PC-3 (cell line): ENCODE measurements at regions of chr19 and their contacts with region 1.

Region 1: DNA sequence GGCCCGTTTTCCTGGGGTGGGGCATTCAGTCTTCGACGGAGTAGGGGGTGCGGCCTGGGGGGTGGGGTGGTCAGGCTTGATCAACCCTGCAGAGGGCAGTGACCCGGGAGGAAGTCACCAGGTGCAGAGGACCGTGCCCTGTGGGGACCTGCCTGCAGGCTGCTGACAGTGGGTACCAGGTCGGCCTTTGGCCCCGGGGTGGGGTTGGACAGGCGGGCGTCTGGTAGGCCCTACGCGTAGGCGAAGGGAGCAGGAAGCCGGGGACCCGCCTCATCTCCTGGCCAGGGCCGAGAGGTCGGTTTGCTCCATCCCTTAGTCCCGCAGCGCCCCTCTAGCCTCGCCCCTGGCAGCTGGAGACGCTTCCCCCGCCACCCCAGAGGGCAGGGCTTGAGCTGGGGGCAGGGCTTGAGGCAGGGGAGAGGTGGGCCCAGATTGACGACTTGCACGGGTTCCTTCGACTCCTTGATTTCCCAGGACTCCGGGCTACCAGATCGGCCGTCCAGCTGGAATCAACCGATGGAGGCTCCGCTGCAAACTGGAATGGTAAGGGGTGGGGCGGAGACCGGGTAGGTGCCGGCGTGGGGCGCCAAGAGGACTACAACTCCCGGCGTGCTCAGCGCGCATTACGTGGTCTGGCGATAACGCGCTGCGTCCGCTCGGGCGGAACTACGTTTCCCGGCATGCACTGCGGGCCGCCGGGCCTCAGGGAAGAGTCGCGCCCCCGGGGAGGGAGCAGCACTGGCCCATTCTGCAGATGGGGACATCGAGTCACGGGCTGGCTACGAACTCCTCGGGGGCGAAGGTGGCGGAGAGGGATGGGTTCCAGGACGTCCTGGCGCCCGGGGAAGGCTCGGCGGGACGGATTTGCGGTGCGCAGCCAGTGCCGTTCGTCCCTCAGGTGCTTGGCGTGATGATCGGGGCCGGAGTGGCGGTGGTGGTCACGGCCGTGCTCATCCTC is at the start of gene PNPLA6:
- DNase-seq: peak; percentile 98
- ATAC-seq: peak; percentile 72
- H3K4me3 ChIP-seq: peak within 1 kb of the TSS; percentile 98
- H3K27ac ChIP-seq: peak within 1 kb of the TSS; percentile 24; the same call in 1 of the 2 replicates
- H3K4me1 ChIP-seq: peaks cover 10% of the 10 kb centered on the region
- H3K27me3 ChIP-seq: no peaks in the 10 kb centered on the region
- CTCF ChIP-seq: no peak
- total RNA-seq, gene PNPLA6: 217 and 291 TPM in 2 replicates

Region 2: DNA sequence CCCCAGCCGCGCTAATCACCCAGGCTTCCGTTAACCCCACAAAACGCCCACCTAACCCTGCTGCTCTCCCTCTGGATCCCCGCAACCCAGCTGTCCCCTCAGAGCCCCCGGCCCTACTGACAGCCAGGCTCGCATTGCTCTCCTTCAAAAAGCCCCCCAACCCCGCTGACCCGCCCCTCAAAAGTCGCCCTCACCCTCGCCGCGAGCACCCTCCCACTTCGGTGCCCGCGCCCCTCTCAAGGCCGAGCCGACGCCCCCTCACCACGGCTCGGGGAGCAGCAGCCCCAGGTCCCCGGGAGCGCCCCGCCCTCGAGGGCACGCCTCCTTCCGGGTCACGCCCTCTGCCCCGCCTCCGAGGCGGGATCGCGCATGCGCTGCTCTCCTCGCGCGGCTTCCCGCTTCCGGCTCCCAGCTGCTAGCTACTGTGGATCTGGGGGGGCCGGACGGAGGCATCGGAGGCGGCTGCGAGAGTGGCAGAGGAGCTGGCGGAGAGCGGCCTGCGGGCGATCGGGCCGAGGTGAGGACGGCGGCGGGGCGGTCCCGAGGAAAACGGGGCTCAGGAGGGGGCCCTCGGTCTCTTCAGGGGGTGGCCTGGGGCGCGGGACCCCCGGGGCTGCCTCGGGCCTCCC is 140.5 kb before region 1 on chr19:
- CTCF ChIA-PET with region 1: no interaction called
- POLR2A ChIA-PET with region 1: no interaction called
- intact Hi-C with region 1: loop called (anchors 2 kb)
- DNase-seq: peak; percentile 96
- ATAC-seq: peak; percentile 35
- H3K4me3 ChIP-seq: peak overlapping the region; percentile 84
- H3K27ac ChIP-seq: peak overlapping the region; percentile 13
- H3K4me1 ChIP-seq: peaks cover 54% of the 10 kb centered on the region
- H3K27me3 ChIP-seq: no peaks in the 10 kb centered on the region
- CTCF ChIP-seq: 0 out of 2 replicates have a peak, but pooled peaks have one; percentile 18

Region 3: DNA sequence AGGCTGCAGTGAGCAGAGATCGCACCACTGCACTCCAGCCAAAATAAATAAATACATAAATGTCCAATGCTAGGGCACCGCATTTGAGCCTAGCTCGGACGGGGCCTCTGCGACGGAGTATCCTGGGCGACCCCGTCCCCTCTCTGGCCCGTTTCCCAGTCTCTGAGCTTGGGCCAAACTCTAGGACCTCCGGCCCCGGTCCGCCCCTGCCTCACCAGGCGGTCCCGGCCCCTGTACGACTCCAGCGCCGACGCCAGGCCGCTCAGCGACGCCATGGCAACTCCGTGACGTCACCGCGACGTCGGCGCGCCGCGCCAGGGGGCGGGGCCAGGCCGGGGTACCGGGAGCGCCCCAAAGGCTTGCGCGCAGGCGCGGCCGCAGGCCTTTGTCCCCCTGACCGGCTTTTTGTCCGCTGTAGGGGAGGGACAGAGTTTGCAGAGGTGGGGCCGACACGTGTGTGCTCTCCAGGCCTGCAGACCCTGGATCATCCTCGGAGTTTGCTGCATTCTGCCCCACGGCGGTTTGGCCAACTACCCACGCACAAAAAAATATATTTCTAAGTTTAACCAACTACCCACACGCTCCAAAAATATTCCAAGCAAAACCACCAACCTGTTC is 46.5 kb before region 1 on chr19 and contains the start of gene PEX11G:
- CTCF ChIA-PET with region 1: no interaction called
- POLR2A ChIA-PET with region 1: no interaction called
- intact Hi-C with region 1: loop called (anchors 2 kb)
- DNase-seq: peak; percentile 94
- ATAC-seq: peak; percentile 96
- H3K4me3 ChIP-seq: peak within 1 kb of the TSS; percentile 70
- H3K27ac ChIP-seq: peak within 1 kb of the TSS; percentile 43
- H3K4me1 ChIP-seq: peaks cover 9% of the 10 kb centered on the region
- H3K27me3 ChIP-seq: no peaks in the 10 kb centered on the region
- CTCF ChIP-seq: no peak
- total RNA-seq, gene PEX11G: 6.6 and 8.6 TPM in 2 replicates

Region 4: GRCh38 chr19:7522072-7522922 is 13.0 kb before region 1 on chr19 and contains the start of gene MCOLN1:
- CTCF ChIA-PET with region 1: no interaction called
- POLR2A ChIA-PET with region 1: no interaction called
- intact Hi-C with region 1: loop called (anchors 1 kb)
- DNase-seq: peak; percentile 99
- ATAC-seq: peak; percentile 78
- H3K4me3 ChIP-seq: peak within 1 kb of the TSS; percentile 78
- H3K27ac ChIP-seq: no peak within 1 kb of the TSS
- H3K4me1 ChIP-seq: peaks cover 13% of the 10 kb centered on the region
- H3K27me3 ChIP-seq: no peaks in the 10 kb centered on the region
- CTCF ChIP-seq: no peak
- total RNA-seq, gene MCOLN1: 10.2 and 22.9 TPM in 2 replicates

Region 5: GRCh38 chr19:7550987-7551761 is 15.9 kb after region 1 on chr19:
- CTCF ChIA-PET with region 1: no interaction called
- POLR2A ChIA-PET with region 1: no interaction called
- intact Hi-C with region 1: no loop called
- DNase-seq: peak; percentile 40
- ATAC-seq: peak; percentile 23; the same call in 1 of the 2 replicates
- H3K4me3 ChIP-seq: no peak overlapping the region
- H3K27ac ChIP-seq: no peak overlapping the region
- H3K4me1 ChIP-seq: no peaks in the 10 kb centered on the region
- H3K27me3 ChIP-seq: no peaks in the 10 kb centered on the region
- CTCF ChIP-seq: no peak

Region 6: GRCh38 chr19:7829561-7830271 is 294.4 kb after region 1 on chr19 and contains the start of gene EVI5L:
- CTCF ChIA-PET with region 1: no interaction called
- POLR2A ChIA-PET with region 1: interaction called, 12 read pairs
- intact Hi-C with region 1: no loop called
- DNase-seq: peak; percentile 100
- ATAC-seq: peak; percentile 81
- H3K4me3 ChIP-seq: peak within 1 kb of the TSS; percentile 70
- H3K27ac ChIP-seq: no peak within 1 kb of the TSS
- H3K4me1 ChIP-seq: peaks cover 42% of the 10 kb centered on the region
- H3K27me3 ChIP-seq: no peaks in the 10 kb centered on the region
- CTCF ChIP-seq: no peak
- total RNA-seq, gene EVI5L: 29.5 and 42.4 TPM in 2 replicates